ENCODE measurements at regions of chr1 and their contacts with region 1.

Region 1: GRCh38 chr1:156797212-156797871 is 19.3 kb downstream of the SH2D2A start:
- DNase-seq: peak; percentile 60
- CTCF ChIP-seq: peak; percentile 73

Region 2: DNA sequence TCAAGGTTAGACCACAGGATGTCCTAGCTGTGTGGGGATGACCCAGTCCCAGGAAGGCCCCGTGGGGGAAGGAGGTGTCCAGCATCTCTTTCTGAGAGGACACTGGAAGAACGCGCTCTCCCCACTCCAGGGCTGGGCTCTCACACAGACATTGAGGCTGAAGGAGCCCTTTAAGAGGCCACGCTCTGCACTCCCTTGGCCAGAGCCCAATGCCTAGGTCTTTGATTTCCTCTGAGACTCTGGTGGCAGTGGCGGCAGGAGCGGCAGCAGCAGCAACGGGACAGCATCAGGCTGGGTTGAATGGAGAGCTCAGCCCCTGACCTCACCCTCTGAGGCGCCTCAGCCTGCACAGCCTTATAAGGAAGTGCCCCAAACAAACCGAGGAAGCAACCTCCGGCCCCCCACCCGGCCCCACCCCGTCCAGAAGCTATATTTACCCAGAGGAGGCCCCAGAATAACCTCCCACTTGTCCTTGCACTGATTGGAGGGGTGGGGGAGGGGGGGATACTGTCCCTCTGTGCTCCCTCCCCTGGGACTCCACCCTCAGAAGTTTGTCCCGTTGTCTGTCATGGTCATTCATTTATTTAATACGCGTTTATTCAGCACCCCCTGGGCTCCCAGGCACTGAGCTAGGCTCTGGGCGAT is 132.5 kb before region 1 on chr1:
- CTCF ChIA-PET with region 1: no interaction called
- POLR2A ChIA-PET with region 1: no interaction called
- DNase-seq: peak; percentile 73
- CTCF ChIP-seq: no peak

Region 3: GRCh38 chr1:156813750-156814570 is 16.6 kb after region 1 on chr1:
- CTCF ChIA-PET with region 1: interaction called, 106 read pairs
- POLR2A ChIA-PET with region 1: no interaction called
- DNase-seq: peak; percentile 82
- CTCF ChIP-seq: peak; percentile 58

Region 4: DNA sequence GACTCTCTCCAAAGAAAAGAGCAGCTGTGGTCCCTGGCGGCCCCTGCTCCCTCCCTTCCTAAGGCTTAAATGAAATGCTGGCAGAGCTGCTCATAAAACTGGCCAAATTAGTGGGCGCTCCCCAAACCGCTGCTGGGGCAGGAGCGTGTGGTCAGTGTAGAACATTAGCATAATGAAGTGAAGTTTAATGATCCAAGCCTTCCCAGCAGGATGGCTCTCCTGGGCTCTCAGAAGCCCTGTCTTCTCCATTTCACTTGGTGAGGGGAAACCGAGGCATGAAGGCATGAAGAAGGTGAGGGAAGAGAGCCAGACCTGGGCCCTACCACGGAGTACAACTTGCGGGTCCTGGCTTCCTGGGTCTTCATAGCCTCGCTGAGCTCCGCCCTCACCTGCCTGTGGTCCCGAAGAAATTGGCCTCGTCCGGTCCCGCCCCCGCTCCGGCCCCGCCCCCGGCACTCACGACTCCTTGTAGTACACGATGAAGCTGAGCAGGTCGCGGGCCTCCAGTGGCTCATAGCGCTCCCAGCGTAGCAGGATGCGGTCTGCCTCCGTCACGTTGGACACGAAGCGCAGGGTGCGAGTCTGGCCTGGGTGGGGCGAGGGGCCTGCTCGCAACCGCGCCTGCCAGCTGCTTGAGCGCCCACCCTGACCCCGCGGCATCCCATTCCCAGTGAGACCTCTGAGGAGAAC is 51.3 kb after region 1 on chr1:
- CTCF ChIA-PET with region 1: no interaction called
- POLR2A ChIA-PET with region 1: no interaction called
- DNase-seq: no peak
- CTCF ChIP-seq: no peak